ENCODE measurements at regions of chr6 and their contacts with region 1.

Region 1: GRCh38 chr6:35139908-35140655 is 1.1 kb downstream of the TCP11 start:
- DNase-seq: peak; percentile 21
- H3K4me3 Mint-ChIP-seq: peak overlapping the region; percentile 65
- H3K27ac Mint-ChIP-seq: peak overlapping the region; percentile 68
- H3K4me1 Mint-ChIP-seq: peaks cover 26% of the 10 kb centered on the region
- H3K27me3 Mint-ChIP-seq: peaks cover 21% of the 10 kb centered on the region

Region 2: DNA sequence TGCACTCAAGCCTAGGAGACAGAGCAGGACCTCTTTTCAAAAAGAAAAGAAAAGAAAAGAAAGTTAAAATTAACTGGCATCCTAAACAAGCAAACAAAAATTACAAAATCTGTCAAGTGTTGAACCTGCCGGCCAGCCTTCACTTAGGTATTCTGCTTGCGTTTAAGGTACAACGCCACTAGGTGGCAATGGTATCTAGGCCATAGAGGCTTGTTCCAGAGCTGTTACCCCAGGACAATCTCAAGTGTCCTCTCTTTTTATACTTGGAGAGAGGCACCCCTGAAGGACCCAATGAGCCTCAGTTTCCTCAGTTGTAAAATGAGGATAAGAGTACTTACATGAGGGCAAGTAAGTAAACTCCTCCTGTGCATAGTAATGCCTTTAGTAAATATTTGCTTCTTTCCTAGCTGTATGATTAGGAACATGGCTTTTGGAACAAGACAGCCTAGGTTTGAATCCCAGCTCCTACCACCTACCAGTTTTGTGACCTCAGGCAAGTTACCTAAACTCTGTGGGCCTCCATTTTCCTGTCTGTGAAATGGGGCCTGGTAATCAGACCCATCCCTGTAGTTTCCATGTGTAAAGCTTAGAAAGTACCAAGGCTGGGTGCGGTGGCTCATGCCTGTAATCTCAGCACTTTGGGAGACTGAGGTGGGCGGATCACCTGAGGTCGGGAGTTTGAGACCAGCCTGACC is 680.0 kb before region 1 on chr6:
- intact Hi-C with region 1: loop called (anchors 1 kb)
- DNase-seq: peak; percentile 34
- H3K4me3 Mint-ChIP-seq: no peak overlapping the region
- H3K27ac Mint-ChIP-seq: no peak overlapping the region
- H3K4me1 Mint-ChIP-seq: no peaks in the 10 kb centered on the region
- H3K27me3 Mint-ChIP-seq: peaks cover 13% of the 10 kb centered on the region

Region 3: DNA sequence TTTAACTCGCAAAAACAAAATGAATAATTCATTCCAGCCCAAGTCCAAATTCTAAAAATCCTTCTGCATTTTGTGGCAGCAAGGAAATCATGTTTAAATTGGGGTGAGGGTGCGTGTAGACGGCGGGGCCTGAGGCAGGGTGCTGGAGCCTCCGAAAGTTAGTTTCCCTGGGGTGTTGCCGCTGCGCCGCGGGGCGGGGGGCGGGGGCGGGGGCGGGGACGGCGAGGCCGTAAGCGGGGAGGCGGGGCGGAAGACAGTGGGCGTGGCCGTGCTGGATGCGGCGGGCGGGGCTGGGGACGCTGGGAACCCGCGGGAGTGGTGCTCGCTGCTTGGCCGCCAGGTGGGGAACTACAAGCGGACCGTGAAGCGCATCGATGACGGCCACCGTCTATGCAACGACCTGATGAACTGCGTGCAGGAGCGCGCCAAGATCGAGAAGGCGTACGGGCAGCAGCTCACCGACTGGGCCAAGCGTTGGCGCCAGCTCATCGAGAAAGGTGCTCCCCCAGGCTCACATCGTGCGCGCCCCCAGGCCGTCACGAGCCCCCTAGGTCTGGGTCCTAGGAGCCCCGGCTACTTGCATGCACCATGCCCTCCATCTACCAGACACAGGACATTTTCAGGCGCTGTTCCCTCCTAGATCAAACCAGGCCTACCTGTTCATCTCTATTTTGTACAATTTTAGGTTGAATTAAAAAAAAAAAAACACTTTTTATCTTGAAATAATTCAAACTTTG is 612.9 kb before region 1 on chr6:
- intact Hi-C with region 1: loop called (anchors 1 kb)
- DNase-seq: peak; percentile 91
- H3K4me3 Mint-ChIP-seq: peak overlapping the region; percentile 6
- H3K27ac Mint-ChIP-seq: no peak overlapping the region
- H3K4me1 Mint-ChIP-seq: no peaks in the 10 kb centered on the region
- H3K27me3 Mint-ChIP-seq: peaks cover 6% of the 10 kb centered on the region

Region 4: GRCh38 chr6:34791701-34792235 is 348.3 kb before region 1 on chr6 and contains the start of gene BLTP3A:
- intact Hi-C with region 1: loop called (anchors 5 kb)
- DNase-seq: peak; percentile 76
- H3K4me3 Mint-ChIP-seq: peak within 1 kb of the TSS; percentile 99
- H3K27ac Mint-ChIP-seq: peak within 1 kb of the TSS; percentile 97
- H3K4me1 Mint-ChIP-seq: peaks cover 29% of the 10 kb centered on the region
- H3K27me3 Mint-ChIP-seq: no peaks in the 10 kb centered on the region
- total RNA-seq, gene BLTP3A: 17.2 and 17.8 TPM in 2 replicates

Region 5: DNA sequence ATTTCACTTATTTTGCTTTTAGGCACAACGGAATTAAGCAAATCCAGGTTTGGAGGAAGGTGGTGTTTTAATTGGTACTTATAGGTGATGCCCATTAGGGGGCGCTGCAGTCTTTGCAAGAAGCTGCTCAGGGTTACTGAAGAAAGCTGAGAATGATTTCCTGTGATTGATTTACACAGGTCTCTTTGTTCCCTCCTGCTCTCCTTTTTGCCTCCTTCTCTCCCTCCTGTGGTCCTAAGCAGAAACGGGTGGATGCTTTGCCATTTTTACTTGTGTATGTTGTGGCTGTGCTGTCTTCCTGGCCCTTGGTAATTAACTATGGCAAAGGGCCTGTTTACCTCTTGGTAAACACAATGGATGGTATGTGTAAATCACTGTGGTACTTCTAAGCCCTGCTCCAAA is 153.2 kb before region 1 on chr6:
- intact Hi-C with region 1: loop called (anchors 1 kb)
- DNase-seq: peak; percentile 37
- H3K4me3 Mint-ChIP-seq: no peak overlapping the region
- H3K27ac Mint-ChIP-seq: no peak overlapping the region
- H3K4me1 Mint-ChIP-seq: no peaks in the 10 kb centered on the region
- H3K27me3 Mint-ChIP-seq: no peaks in the 10 kb centered on the region

Region 6: DNA sequence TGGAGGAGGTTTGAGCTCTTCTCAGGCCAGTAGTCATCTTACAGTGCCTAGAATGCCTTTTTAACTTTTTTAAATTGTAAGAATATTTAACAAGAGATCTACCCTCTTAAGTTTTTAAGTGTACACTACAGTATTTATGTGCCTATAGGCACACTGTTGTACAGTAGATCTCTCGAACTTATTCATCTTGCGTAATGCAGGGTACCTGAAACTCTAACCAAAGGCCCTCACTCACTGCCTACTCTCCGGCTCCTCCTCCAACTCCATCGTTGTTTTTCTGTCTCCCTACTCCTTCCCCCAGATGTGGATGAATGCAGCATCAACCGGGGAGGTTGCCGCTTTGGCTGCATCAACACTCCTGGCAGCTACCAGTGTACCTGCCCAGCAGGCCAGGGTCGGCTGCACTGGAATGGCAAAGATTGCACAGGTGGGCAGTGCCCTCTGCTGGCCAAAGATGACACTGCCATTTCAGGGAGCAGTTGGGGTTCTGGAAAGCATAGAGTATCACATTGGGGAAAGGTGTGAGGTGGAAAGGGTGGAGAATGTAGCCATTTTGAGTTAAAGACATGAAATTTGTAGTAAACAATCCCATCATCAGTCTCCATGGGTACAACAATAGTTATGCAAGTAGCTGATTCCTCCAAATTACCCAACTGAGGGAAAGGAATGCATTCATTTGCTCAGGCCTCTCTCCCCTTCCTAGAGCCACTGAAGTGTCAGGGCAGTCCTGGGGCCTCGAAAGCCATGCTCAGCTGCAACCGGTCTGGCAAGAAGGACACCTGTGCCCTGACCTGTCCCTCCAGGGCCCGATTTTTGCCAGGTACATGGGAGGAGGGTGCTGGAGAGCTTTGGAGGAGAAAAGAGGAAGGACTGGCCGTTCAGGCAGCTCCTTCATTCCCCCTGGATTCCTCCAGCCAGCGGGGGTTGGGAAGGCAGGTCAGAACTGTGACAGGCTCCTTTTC is 101.0 kb after region 1 on chr6:
- intact Hi-C with region 1: loop called (anchors 1 kb)
- DNase-seq: peak; percentile 61
- H3K4me3 Mint-ChIP-seq: no peak overlapping the region
- H3K27ac Mint-ChIP-seq: no peak overlapping the region
- H3K4me1 Mint-ChIP-seq: peaks cover 7% of the 10 kb centered on the region
- H3K27me3 Mint-ChIP-seq: peaks cover 3% of the 10 kb centered on the region

Measured in activated T-helper 1 cell treated with anti-CD3 and anti-CD28 coated beads, Interleukin-12 subunit alpha, Interleukin-12 subunit beta, Interleukin-2, Interleukin-4 antibody, amounts not matched to agents 30 ng/mL and 10 ng/mL and 1 ng/mL, durations not matched to agents 14 hours and 24 hours and 36 hours (primary cell).